Left cardiac atrium (tissue), 4 donors: ENCODE measurements at regions of chr1 and their contacts with region 1.

Region 1: DNA sequence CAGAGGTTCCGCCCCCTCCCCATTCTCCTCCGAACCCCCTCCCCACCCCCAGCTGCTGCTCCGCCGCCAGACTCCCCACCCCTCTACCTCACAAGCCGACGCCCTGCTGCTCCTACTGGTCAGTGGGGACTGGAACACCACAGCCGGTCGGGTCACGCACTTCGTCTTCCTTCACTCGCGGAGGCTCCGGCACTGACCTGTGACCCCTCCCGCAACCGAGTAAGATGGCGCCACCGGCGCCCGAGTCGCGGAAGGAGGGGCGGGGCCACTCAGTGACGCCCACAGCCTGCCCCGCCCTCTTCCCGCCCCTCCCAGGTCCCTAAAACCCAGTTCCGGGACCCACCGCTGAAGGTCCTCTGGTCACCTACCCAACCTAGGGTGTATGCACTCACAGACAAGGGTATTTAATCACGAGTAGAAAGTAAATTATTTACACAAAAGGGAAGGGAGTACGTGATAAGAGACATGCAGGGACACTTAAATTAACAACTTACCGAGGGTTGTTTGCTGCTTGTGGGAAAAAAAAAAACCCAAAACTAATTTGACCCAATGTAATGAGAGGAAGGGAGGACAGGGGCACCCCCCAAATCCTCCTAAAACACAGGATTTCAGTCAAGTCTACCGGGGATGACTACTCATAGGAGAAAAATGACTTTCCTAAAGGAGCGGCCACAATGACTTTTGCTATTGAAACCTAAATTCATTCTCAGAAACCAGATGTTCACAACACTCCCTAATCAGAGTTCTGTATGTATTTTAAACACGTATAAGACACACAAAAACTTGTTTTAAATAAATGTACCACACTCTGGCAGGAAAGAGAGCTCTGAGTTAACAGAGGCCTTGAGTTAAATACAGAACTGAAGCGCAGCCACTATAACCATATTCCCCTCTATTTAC is at the start of gene RIT1:
- DNase-seq: peak; percentile 91
- ATAC-seq: peak; percentile 98 to 99
- total RNA-seq, gene RIT1: 23.1 to 26.1 TPM

Region 2: GRCh38 chr1:155816351-155816750 is 95.1 kb before region 1 on chr1:
- intact Hi-C with region 1: loop called in 1 of 2 experiments (anchors 10 kb)
- DNase-seq: no peak
- ATAC-seq: no peak

Region 3: GRCh38 chr1:155859881-155860871 is 51.2 kb before region 1 on chr1:
- intact Hi-C with region 1: loop called in 1 of 2 experiments (anchors 2 kb)
- DNase-seq: peak; percentile 90
- ATAC-seq: peak; percentile 56 to 81